Activated CD4-positive, alpha-beta T cell treated with anti-CD3 and anti-CD28 coated beads, Interleukin-2, amount 10 ng/mL, durations not matched to agents 24 days and 14 days (primary cell): ENCODE measurements at regions of chr2 and their contacts with region 1.

Region 1: GRCh38 chr2:199704358-199705238 is 146.4 kb downstream of the FTCDNL1 start:
- DNase-seq: peak; percentile 74
- H3K4me3 Mint-ChIP-seq: no peak overlapping the region
- H3K27ac Mint-ChIP-seq: no peak overlapping the region
- H3K4me1 Mint-ChIP-seq: peaks cover 2% of the 10 kb centered on the region
- H3K27me3 Mint-ChIP-seq: peaks cover 8% of the 10 kb centered on the region

Region 2: DNA sequence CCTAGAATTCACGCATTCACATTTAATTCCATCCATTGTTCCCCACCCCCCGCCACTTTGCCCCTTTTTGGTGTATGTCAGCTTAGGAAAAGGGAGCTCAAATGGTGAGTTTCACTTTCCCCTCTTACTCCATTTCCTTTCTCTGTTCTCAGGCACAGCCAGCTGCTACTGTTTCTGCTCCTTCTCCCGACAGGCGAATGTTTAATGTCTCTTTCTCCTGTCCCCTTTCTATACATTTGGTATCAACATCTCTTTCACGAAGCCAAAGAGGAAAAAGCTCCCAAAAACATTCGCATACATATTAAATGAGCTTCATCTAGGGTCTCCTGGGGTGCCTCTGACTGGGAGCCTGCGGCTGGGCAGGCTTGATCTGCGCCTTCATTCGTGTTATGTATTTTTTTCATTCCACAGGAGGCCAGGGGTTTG is 122.7 kb before region 1 on chr2:
- intact Hi-C with region 1: no loop called
- DNase-seq: no peak
- H3K4me3 Mint-ChIP-seq: no peak overlapping the region
- H3K27ac Mint-ChIP-seq: no peak overlapping the region
- H3K4me1 Mint-ChIP-seq: peaks cover 3% of the 10 kb centered on the region
- H3K27me3 Mint-ChIP-seq: peaks cover 18% of the 10 kb centered on the region

Region 3: DNA sequence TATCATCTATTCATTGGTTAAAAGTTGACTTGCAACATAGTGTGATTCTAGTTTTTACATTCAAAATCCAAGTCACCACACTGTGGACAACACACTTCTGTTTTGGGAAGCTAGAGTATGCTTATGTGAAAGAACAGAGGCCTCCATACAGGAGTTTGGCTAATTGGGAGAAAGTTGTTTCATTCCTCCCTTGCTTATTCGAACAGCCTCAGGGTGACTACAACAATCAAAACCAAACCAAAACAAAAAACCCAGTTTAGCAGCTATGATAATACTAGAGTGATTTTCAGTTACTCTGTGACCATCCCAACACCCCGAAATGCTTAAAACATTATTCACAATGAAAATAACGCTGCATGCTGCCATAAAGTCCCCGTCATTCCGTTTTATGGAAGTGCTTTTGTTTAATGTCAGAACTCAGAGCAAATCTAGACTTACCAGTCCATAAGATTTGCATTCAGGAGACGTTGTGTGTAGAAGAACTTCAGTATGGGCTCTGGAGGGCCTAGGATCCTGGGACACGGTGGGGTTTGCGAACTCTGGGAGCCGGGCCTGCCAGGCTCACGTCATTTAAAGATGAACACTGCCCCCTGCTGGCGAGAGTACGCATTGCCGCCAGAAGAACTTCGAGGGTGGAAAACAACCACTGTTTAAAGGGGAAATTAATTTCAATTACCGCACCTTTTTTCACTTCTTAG is 35.0 kb after region 1 on chr2:
- intact Hi-C with region 1: loop called (anchors 1 kb)
- DNase-seq: peak; percentile 86
- H3K4me3 Mint-ChIP-seq: no peak overlapping the region
- H3K27ac Mint-ChIP-seq: no peak overlapping the region
- H3K4me1 Mint-ChIP-seq: peaks cover 4% of the 10 kb centered on the region
- H3K27me3 Mint-ChIP-seq: peaks cover 23% of the 10 kb centered on the region

Region 4: DNA sequence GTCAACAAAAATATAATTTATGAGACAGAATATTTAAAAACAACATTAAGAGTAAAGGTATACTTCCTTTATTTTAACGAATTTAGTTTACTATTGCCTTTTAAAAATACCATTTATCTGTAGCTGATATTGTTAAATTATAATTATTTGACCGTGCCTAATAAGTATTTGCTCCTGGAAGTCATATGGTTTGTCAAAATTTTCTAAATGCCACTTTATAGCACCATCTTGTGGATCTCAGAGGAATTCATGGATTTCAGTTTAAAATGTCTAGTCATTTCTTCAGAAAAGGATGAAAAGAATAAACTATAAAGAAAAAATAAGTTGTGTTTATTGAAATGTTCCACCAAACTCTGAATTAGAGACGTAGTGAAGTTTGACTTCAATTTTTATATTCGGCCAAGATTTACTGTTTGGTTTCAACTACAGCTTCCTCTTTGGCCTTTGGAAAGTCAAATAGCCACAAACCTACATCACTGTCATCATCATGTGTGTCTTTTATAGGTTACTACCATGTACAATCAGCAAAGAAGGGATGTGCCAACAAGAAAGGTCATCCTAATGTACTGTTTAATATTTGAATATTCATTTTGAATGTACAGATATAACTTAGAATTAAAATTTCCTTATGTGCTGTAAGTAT is 156.7 kb after region 1 on chr2:
- intact Hi-C with region 1: loop called (anchors 2 kb)
- DNase-seq: no peak
- H3K4me3 Mint-ChIP-seq: no peak overlapping the region
- H3K27ac Mint-ChIP-seq: no peak overlapping the region
- H3K4me1 Mint-ChIP-seq: no peaks in the 10 kb centered on the region
- H3K27me3 Mint-ChIP-seq: peaks cover 47% of the 10 kb centered on the region